Common myeloid progenitor, CD34-positive (primary cell): ENCODE measurements at regions of chr17 and their contacts with region 1.

Region 1: DNA sequence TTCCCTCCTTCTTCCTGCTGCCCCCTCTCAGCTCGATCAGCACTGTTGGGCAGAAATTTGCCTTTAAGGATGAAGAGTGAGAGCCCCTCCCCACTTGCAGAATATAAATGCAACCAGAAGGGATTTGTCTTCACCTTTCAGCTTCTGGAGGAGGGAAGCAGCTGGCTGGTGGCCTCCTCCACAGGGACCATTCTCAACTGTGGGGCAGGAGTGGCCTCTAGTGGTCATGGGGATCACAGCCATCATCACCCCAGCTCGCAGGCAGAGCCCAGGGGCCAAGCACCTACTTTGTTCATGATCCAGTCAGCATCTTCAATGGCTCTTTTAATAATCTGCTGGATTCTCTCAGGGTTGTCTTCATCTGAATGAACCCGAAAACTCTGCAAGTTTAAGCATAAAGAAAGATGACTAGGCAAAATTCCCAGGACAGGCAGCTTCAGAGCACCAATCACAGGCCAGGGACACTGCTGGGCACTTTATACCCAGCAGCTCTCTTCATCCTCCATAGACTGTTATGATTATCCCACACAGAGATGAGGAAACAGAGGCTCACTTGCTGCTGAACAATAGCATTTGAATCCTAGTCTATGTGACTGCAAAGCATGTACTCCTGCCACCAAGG is 13.1 kb downstream of the LYRM9 start:
- DNase-seq: peak; percentile 43 to 74 (median 69)
- H3K4me3 ChIP-seq: no peak overlapping the region
- H3K27ac ChIP-seq: no peak overlapping the region
- H3K4me1 ChIP-seq: peaks cover 0 to 7% (median 2%) of the 10 kb centered on the region in 4 experiments
- H3K27me3 ChIP-seq: no peaks in the 10 kb centered on the region

Region 2: GRCh38 chr17:27760069-27760885 is 119.8 kb before region 1 on chr17:
- CTCF ChIA-PET with region 1: interaction called, 128 read pairs
- POLR2A ChIA-PET with region 1: no interaction called
- DNase-seq: peak; percentile 40 to 67 (median 57)
- H3K4me3 ChIP-seq: no peak overlapping the region
- H3K27ac ChIP-seq: no peak overlapping the region
- H3K4me1 ChIP-seq: no peaks in the 10 kb centered on the region
- H3K27me3 ChIP-seq: peaks cover 0 to 1% (median 0%) of the 10 kb centered on the region in 5 experiments

Region 3: DNA sequence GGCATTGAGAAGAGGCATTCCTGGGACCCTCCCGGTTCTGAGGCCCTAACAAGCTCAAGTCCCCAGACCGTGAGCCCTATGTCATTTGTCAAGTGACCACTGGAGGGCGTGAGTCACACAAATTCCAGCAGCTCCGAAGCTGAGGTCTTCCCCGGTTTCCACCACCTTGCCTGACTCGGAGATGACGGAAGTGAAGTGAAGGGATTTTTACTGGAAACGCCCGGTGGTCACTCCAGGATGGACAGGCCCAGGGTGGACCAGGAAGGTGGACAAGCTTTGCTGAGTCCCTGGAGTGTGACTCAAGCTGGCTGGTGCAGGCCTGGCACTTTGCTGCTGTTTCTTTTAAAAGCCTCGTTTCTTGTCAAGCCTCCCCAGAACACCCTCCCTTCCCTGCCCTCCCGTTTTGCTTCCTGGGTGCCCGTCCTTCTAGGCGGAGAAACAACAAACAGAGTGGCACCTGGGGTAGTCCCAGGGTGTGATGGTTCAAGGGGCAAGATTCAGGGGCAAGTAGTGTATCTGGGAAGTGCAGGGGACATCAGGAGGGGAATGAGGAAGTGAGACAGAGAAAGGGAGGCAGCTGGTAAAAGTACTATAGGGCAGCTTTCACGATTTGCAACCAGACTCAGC is 74.5 kb before region 1 on chr17:
- CTCF ChIA-PET with region 1: interaction called, 223 read pairs
- POLR2A ChIA-PET with region 1: interaction called, 6 read pairs
- DNase-seq: peak; percentile 85 to 91 (median 88)
- H3K4me3 ChIP-seq: peak overlapping the region; percentile 24 to 82 (median 67)
- H3K27ac ChIP-seq: peak overlapping the region in 1 of 2 experiments; percentile 54
- H3K4me1 ChIP-seq: peaks cover 0 to 21% (median 14%) of the 10 kb centered on the region in 4 experiments
- H3K27me3 ChIP-seq: no peaks in the 10 kb centered on the region

Region 4: GRCh38 chr17:27846042-27846655 is 33.9 kb before region 1 on chr17:
- CTCF ChIA-PET with region 1: interaction called, 13 read pairs
- POLR2A ChIA-PET with region 1: no interaction called
- DNase-seq: peak; percentile 54 to 89 (median 78)
- H3K4me3 ChIP-seq: peak overlapping the region in 4 of 7 experiments; percentile 28 to 35 (median 32)
- H3K27ac ChIP-seq: no peak overlapping the region
- H3K4me1 ChIP-seq: peaks cover 0 to 17% (median 10%) of the 10 kb centered on the region in 4 experiments
- H3K27me3 ChIP-seq: no peaks in the 10 kb centered on the region

Region 5: DNA sequence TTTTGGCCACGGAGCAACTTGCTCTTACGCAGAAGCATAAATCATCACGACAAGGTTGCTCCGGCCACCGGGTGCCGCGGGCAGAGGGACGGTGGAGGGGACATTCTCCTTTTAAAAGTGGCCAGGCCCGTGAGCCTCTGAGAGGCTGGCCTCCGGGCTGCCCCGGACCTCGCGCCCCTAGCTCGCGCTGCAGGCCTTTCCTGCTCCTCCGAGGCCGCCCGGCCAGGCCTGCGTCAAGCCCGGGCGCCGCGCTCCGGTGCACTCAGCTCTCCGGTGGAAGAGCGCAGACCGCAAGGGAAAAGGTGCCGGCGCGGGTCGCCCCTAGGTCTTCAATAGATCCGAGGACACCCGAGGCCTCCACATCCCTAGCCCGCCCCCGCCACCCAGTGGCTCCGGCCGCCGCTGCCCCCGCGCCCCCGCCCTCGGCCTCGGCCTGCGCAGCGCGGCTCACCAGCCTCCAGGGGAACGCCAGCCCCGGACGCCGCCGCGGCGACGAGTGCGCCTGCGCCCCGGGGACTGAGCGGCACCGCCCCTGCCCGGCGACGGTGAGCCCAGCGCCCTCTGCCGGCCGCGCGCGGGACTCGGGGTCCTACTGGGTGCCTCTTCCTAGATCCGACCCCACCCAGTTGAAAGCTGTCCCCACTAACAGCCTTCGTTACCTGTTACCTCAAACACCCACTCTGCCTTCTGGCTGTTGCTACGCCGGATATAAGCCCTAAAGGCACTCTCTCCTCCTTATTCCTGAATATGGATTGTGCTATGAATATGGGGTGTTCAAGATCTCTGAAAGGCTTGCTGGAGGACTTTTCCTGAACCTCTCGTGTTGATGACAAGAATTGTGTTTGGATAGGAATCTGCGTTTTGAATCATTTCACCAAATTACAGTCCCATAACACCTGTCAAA is 13.0 kb after region 1 on chr17 and contains the start of gene LYRM9:
- CTCF ChIA-PET with region 1: interaction called, 23 read pairs
- POLR2A ChIA-PET with region 1: no interaction called
- DNase-seq: peak; percentile 85 to 92 (median 90)
- H3K4me3 ChIP-seq: peak within 1 kb of the TSS; percentile 58 to 80 (median 76)
- H3K27ac ChIP-seq: peak within 1 kb of the TSS; percentile 18 to 75
- H3K4me1 ChIP-seq: peaks cover 14 to 31% (median 22%) of the 10 kb centered on the region in 4 experiments
- H3K27me3 ChIP-seq: no peaks in the 10 kb centered on the region

Region 6: DNA sequence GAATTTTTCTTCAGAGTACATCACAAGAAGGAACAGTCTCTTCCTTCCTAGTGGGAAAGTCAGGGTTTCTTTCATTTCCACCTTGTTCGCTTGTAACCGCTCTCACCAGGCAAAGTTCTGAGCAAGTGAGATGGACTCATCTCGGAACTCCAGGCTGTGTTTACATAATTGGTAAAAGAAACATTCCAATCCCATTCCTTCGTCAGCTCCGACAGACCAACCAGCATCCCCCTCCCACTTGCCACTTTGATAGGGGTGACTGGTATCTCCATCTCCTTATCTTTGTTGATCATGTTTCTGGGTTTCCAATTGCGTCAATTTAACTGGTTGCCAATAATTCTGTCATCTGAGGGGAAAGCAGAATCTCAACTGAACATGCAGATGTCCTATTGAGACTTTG is 49.9 kb after region 1 on chr17:
- CTCF ChIA-PET with region 1: no interaction called
- POLR2A ChIA-PET with region 1: no interaction called
- DNase-seq: no peak
- H3K4me3 ChIP-seq: no peak overlapping the region
- H3K27ac ChIP-seq: no peak overlapping the region
- H3K4me1 ChIP-seq: peaks cover 0 to 4% (median 0%) of the 10 kb centered on the region in 4 experiments
- H3K27me3 ChIP-seq: peaks cover 0 to 2% (median 0%) of the 10 kb centered on the region in 5 experiments

Region 7: GRCh38 chr17:28346746-28347246 is 466.7 kb after region 1 on chr17:
- CTCF ChIA-PET with region 1: no interaction called
- POLR2A ChIA-PET with region 1: no interaction called
- DNase-seq: peak in 2 of 3 donors; percentile 18 to 19
- H3K4me3 ChIP-seq: no peak overlapping the region
- H3K27ac ChIP-seq: no peak overlapping the region
- H3K4me1 ChIP-seq: no peaks in the 10 kb centered on the region
- H3K27me3 ChIP-seq: no peaks in the 10 kb centered on the region